GM10248 (cell line): ENCODE measurements at regions of chr1 and their contacts with region 1.

Region 1: GRCh38 chr1:113072757-113073478 is at the start of gene LRIG2:
- DNase-seq: peak; percentile 95
- CTCF ChIP-seq: peak; percentile 94

Region 2: GRCh38 chr1:112882271-112882744 is 190.6 kb before region 1 on chr1:
- CTCF ChIA-PET with region 1: interaction called, 73 read pairs
- POLR2A ChIA-PET with region 1: interaction called, 3 read pairs
- DNase-seq: no peak
- CTCF ChIP-seq: no peak

Region 3: DNA sequence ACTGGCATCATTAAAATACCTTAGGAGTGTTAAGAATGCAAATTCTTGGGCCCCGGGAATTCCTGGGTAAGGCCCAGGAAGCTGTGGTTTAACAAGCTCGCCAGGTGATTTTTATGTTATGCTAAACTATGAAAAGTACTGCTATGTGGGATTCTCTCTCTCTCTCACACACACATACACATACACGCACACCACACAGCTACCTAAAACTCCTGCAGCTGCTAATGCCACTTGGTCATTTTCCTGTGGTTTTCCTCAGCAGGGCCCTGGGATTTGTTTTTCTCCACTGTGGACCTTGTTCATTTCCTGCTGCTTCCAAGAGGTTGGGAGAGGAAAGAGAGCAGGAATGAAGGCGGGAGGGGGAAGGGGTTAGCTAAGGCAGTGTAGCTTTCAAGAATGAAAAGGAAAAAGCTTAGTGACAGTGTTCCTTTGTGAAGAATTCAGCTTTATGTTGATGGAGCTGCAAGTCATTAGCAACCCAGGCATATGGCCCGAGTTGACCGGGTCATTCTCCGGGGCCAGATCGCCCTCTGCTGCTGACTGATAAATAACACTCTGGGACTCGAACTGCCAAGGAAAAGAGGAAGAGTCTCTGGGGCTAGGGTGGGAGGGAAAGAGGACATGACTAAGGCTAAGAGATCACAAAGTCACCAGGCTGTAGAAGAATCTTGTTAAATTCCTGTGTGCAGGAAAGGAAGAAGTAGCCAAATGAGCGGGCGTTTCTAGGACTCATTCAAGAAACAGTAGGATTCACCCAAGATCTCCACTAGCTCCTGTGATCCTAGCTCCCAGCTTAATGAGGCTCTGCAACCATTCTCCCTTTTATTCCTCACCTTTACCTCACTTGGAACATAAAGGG is 30.4 kb before region 1 on chr1:
- CTCF ChIA-PET with region 1: interaction called, 43 read pairs
- POLR2A ChIA-PET with region 1: interaction called, 4 read pairs
- DNase-seq: peak; percentile 75
- CTCF ChIP-seq: peak; percentile 75

Region 4: DNA sequence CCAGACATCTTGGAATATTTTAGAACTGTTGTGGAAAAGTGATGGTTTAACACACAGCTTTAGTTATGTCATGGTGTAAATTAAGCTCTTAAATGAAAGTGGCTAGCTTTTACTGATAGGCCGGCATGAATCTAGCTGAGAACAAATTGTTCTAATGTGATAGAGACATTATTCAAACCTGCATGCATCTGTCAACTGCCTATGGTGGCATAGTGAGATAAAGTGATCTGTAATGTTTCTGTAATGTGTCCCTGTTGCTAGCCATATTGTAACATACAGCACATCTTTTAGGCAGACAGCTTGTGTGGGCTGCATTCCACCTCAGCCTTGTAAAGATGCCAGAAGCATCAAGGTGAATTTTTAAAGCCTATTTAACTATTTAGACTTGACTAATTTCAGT is 16.1 kb after region 1 on chr1:
- CTCF ChIA-PET with region 1: interaction called, 26 read pairs
- POLR2A ChIA-PET with region 1: no interaction called
- DNase-seq: no peak
- CTCF ChIP-seq: no peak

Region 5: GRCh38 chr1:113166473-113166872 is 93.6 kb after region 1 on chr1:
- CTCF ChIA-PET with region 1: no interaction called
- POLR2A ChIA-PET with region 1: no interaction called
- DNase-seq: no peak
- CTCF ChIP-seq: no peak

Region 6: DNA sequence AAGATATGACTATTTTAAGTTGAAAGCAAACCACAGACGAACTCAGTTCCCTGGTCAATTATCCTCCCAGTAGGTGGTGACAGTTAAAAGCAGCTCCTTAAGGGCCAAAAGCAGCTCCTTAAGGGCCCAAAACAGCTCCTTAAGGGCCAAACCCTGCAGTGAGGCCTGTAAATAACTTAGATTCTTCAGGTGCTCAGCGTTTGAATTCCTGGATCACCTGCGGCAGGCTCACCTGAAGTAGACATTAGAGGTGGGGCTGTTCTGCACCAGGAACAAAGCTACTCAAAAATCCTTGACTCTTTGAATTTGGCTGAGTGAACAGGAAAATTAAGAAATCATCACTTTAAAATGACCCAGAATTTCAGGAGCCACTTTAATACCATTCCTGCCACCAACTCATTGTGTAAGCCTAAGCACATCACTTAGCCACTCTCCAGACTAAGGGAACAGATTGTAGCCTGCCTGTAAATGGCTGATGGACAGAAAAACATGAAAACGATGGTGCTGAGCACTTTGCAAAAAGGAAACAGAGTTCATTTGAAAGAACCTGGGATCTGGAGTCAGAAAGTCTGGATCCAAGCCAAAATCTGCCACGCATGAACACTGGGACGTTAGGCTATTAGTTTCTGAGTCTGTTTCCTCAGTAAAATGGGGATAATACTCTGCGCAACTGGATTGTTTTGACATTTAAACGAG is 127.0 kb after region 1 on chr1:
- CTCF ChIA-PET with region 1: no interaction called
- POLR2A ChIA-PET with region 1: no interaction called
- DNase-seq: no peak
- CTCF ChIP-seq: no peak